ENCODE measurements at regions of chr17 and their contacts with region 1.

Region 1: DNA sequence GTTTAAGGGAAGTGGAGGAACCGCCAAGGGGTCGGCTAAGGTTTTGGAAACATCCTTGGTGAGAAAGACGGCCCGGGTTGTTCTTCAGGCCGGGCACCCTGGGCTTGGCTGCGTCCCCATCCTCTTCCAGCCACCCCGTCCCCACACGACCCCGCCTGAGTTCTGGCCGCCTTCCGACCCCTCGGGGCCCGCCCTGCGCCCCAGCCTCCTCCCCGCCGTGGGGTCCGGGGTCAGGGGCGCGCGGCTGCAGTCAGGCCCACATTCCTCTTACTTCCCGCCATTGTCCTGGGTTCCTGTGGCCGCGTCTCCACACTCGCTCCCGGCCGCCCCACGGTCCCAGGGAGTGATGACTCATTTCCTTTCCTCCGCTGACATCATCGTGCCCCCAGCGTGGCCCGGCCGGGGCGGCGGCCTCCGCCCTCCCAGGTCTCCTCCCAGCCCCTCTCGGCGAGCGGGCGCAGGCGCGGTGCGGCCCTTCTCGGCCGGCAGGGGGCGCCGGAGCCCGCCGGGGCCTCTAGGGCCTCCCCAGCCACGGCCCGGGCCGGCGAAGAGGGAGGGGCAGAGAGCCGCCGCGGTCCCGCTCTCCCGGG is 59.6 kb downstream of the WSB1 start:
- DNase-seq: peak; percentile 96
- H3K4me3 Mint-ChIP-seq: peak overlapping the region; percentile 91
- H3K27ac Mint-ChIP-seq: peak overlapping the region; percentile 95
- H3K4me1 Mint-ChIP-seq: peaks cover 26% of the 10 kb centered on the region
- H3K27me3 Mint-ChIP-seq: no peaks in the 10 kb centered on the region

Region 2: DNA sequence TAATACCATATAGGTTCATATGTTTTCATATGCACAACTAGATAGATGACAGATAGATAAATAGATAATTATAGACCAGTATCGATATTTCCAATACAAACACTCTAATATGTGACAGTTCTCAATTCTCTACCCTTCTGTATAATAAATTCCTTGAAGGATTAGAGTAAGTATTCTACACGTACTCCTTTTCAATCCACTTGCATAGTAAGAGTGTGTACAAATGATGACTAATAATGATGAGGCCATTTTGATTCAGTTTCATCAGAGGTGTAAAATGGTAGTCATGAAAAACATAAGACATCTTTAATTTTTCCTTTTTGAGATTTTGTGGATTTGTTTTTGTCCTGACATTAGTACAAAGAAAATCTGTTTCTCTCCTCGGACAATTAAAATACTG is 247.9 kb before region 1 on chr17:
- intact Hi-C with region 1: no loop called
- DNase-seq: no peak
- H3K4me3 Mint-ChIP-seq: no peak overlapping the region
- H3K27ac Mint-ChIP-seq: no peak overlapping the region
- H3K4me1 Mint-ChIP-seq: no peaks in the 10 kb centered on the region
- H3K27me3 Mint-ChIP-seq: no peaks in the 10 kb centered on the region

Region 3: GRCh38 chr17:27244491-27245223 is 108.9 kb before region 1 on chr17:
- intact Hi-C with region 1: loop called (anchors 5 kb)
- DNase-seq: no peak
- H3K4me3 Mint-ChIP-seq: no peak overlapping the region
- H3K27ac Mint-ChIP-seq: no peak overlapping the region
- H3K4me1 Mint-ChIP-seq: peaks cover 19% of the 10 kb centered on the region
- H3K27me3 Mint-ChIP-seq: peaks cover 17% of the 10 kb centered on the region

Region 4: GRCh38 chr17:27293898-27294688 is 59.5 kb before region 1 on chr17 and contains the start of gene WSB1:
- intact Hi-C with region 1: loop called (anchors 2 kb)
- DNase-seq: peak; percentile 98
- H3K4me3 Mint-ChIP-seq: peak within 1 kb of the TSS; percentile 98
- H3K27ac Mint-ChIP-seq: peak within 1 kb of the TSS; percentile 100
- H3K4me1 Mint-ChIP-seq: peaks cover 30% of the 10 kb centered on the region
- H3K27me3 Mint-ChIP-seq: no peaks in the 10 kb centered on the region
- total RNA-seq, gene WSB1: 135 and 136 TPM in 2 replicates

Region 5: GRCh38 chr17:27332485-27333409 is 20.8 kb before region 1 on chr17:
- intact Hi-C with region 1: loop called (anchors 1 kb)
- DNase-seq: peak; percentile 96
- H3K4me3 Mint-ChIP-seq: peak overlapping the region; percentile 86
- H3K27ac Mint-ChIP-seq: peak overlapping the region; percentile 98
- H3K4me1 Mint-ChIP-seq: peaks cover 22% of the 10 kb centered on the region
- H3K27me3 Mint-ChIP-seq: peaks cover 1% of the 10 kb centered on the region

Region 6: DNA sequence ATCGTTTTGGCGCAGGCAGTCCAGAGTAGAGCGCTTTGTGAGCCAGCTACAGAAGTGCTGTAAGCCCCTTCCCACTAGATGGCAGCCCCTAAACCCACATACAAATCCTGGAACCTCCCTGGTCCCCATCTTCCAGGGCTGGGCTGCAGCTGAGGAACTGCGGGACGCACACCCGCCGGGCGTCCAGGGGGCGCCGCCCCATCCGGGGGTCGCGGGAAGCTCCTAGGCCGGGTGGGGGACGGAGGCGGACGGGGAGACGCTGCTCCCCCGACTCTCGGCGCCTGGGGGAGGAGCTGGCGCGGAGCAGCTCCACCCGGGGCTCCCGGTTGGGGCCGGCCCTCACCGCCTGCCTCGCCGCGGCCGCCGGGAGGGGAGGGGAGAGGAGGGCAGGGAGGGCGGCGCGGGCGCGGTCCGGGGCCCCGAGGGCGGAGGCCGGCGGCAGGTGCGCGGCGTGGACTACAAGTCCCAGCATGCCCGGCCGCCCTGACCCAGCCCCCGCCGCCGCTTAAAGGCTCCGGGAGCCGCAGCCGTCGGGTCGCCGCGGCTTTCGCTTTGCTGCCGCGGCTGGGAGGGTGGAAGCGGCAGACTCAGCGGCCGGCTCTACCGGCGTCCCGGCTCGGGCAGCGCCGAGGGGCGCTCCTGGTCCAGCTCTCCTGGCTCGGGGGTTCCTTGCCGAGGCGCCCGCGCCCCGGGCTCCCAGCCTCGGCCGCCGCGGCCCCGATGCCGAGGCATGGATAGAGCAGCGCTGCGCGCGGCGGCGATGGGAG is 102.5 kb after region 1 on chr17 and contains the start of gene KSR1:
- intact Hi-C with region 1: loop called (anchors 5 kb)
- DNase-seq: peak; percentile 95
- H3K4me3 Mint-ChIP-seq: peak within 1 kb of the TSS; percentile 98
- H3K27ac Mint-ChIP-seq: peak within 1 kb of the TSS; percentile 77
- H3K4me1 Mint-ChIP-seq: peaks cover 42% of the 10 kb centered on the region
- H3K27me3 Mint-ChIP-seq: no peaks in the 10 kb centered on the region
- total RNA-seq, gene KSR1: 104 TPM in 2 replicates

Region 7: DNA sequence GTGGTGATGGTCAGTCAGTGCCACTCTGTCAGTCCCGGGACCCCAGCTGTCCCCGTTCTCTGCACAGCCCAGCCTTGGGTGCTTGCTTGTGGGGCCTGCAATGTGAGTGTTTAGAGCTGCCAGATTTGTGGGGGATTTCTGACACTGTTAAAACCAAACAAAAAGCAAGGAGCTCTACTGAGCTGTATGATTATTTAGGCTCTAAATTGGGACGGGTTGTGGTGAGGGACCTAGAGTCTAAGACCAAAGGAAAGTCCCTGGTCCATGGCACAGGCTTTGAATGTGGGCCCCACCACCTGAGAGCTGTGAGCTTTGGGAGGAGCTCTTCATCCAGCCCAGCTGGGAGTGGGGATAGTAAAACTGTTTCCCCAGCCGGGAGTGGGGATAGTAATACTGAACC is 166.0 kb after region 1 on chr17:
- intact Hi-C with region 1: no loop called
- DNase-seq: no peak
- H3K4me3 Mint-ChIP-seq: no peak overlapping the region
- H3K27ac Mint-ChIP-seq: peak overlapping the region; percentile 17
- H3K4me1 Mint-ChIP-seq: peaks cover 66% of the 10 kb centered on the region
- H3K27me3 Mint-ChIP-seq: no peaks in the 10 kb centered on the region

Region 8: GRCh38 chr17:27654654-27655524 is 301.3 kb after region 1 on chr17:
- intact Hi-C with region 1: loop called (anchors 1 kb)
- DNase-seq: peak; percentile 90
- H3K4me3 Mint-ChIP-seq: no peak overlapping the region
- H3K27ac Mint-ChIP-seq: peak overlapping the region; percentile 51
- H3K4me1 Mint-ChIP-seq: peaks cover 9% of the 10 kb centered on the region
- H3K27me3 Mint-ChIP-seq: no peaks in the 10 kb centered on the region

Measured in activated CD4-positive, alpha-beta T cell treated with anti-CD3 and anti-CD28 coated beads, Interleukin-2, amount 10 ng/mL, durations not matched to agents 24 days and 14 days (primary cell).